HEK293T (cell line): ENCODE measurements at regions of chr11 and their contacts with region 1.

Region 1: GRCh38 chr11:64688534-64688982 is 34.4 kb downstream of the NRXN2 start:
- DNase-seq: peak; percentile 91

Region 2: GRCh38 chr11:64605244-64605560 is 83.4 kb before region 1 on chr11:
- CTCF ChIA-PET with region 1: interaction called, 10 read pairs
- POLR2A ChIA-PET with region 1: no interaction called
- DNase-seq: no peak

Region 3: GRCh38 chr11:64674774-64675173 is 13.8 kb before region 1 on chr11:
- CTCF ChIA-PET with region 1: interaction called, 14 read pairs
- POLR2A ChIA-PET with region 1: no interaction called
- DNase-seq: no peak

Region 4: DNA sequence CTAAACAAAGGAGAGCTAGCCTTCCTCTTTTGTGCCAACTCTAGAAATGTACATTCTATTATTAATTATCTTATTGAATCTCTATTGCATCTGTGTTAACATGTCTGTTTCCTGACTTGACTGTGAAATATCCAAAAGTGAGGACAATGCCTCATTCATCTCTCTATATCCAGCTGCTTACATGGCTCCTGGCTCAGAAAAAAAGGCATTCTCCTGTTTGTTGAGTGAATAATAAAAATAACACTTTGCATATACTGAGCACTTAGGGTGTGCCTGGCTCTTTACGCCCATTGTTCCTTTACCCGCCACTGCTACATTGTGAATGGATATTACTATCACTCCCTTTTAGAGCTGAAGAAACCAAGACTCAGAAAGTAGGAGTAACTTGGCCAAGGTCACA is 14.5 kb after region 1 on chr11:
- CTCF ChIA-PET with region 1: interaction called, 33 read pairs
- POLR2A ChIA-PET with region 1: interaction called, 3 read pairs
- DNase-seq: no peak

Region 5: DNA sequence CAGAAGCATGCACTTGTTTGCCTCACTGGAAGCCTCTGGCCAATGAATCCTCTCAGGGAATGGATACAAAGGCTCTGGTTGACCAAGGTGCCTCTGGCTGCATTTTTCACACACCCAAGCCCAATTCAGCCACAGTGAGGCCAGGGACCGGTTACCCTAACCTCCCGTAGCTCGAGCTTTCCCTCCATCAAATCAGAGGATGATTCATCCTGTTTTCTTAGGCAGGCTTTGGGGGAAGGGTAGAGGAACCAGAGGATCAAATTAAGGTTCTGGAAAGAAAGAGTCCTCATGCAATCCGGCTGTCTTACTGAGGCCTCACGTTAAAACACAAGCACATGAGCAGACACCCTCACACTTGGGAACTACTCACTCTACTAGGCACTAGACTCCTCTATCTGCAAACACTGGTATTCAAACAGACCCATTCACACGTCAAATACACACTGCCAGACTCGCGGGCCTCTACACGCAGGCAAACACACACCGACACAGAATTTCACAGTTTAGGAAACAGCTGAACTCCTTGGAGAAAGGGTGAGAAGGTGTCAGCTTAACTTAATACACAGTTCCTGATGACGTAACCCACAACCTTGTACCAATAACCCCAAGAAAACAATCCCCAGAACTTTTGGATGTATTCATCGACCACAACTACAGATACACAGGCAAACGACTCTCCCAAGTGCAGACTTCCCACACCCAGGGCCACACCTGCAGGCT is 22.0 kb after region 1 on chr11:
- CTCF ChIA-PET with region 1: interaction called, 33 read pairs
- POLR2A ChIA-PET with region 1: interaction called, 3 read pairs
- DNase-seq: no peak

Region 6: DNA sequence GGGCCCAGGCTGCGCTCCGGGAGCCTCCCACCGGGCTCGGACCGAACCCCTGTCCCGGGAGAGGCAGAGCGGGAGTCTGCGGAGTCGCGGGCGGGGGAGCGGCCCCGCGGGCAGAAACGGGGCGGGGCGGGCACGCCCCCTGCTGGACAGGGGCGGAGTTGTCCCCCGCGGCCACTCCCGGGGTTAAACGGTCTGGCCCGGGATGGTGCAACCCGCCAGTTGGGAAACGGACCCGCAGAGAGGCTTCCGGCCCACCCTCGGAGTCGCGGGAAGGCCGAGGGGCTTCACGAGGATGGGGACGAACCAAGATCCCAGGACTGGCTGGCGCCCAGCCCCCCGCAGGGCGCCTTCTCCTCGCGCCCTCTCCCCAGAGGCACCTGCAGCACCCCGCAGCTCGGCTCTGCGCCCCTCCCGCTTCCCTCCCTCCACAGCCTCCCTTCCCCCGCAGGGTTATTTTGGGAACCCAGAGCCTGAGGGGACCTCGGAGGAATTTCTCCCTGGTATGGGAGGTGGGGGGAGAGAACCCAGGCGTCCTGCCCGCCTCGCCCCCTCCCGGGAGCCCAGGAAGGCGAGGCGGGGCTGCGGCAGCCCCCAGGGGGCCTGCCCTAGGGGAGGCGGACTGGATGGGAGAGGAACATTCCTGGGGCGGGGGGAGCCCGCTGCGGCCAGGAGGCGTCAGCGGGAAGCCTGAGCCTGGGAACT is 54.5 kb after region 1 on chr11:
- CTCF ChIA-PET with region 1: interaction called, 14 read pairs
- POLR2A ChIA-PET with region 1: no interaction called
- DNase-seq: peak; percentile 91

Region 7: GRCh38 chr11:64767344-64768299 is 79.1 kb after region 1 on chr11:
- CTCF ChIA-PET with region 1: no interaction called
- POLR2A ChIA-PET with region 1: no interaction called
- DNase-seq: peak; percentile 63